Mammary epithelial cell (primary cell): ENCODE measurements at regions of chr18 and their contacts with region 1.

Region 1: GRCh38 chr18:45212181-45213039 is 402.9 kb upstream of the SLC14A2 start:
- DNase-seq: peak; percentile 63
- H3K4me3 ChIP-seq: no peak overlapping the region
- H3K27ac ChIP-seq: no peak overlapping the region
- H3K4me1 ChIP-seq: no peaks in the 10 kb centered on the region
- H3K27me3 ChIP-seq: no peaks in the 10 kb centered on the region
- CTCF ChIP-seq: peak; percentile 100

Region 2: DNA sequence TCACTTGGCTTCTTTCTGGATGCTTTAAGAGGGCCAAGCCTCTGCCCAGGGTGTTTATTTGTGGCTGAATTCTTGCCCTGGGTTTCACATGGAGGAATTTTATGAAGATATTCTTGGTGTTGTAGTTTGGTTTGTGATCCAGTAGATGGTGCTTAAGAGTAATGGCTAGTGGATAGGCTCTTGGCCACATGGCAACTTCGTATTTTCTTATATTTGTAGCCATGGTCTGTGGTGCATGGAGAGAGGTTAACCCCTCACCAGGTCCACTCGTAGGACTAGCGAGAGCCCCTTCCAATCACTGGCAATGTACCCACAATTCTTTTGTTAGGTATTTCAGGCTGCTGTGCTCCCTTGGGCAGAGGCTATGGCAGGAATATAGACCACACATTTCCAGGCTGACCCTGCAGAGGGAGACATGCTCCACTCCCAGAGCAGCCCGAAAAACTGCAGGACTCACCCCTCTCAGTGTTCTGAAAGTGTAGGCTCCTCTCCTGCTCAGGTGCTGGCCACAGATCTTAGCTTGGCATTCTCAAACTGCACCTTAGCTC is 1113.8 kb before region 1 on chr18:
- CTCF ChIA-PET with region 1: interaction called, 7 read pairs
- dilution Hi-C with region 1: no loop called
- in situ Hi-C with region 1: loop called (anchors 25 kb)
- intact Hi-C with region 1: loop called (anchors 5 kb)
- DNase-seq: peak; percentile 56
- H3K4me3 ChIP-seq: no peak overlapping the region
- H3K27ac ChIP-seq: no peak overlapping the region
- H3K4me1 ChIP-seq: no peaks in the 10 kb centered on the region
- H3K27me3 ChIP-seq: no peaks in the 10 kb centered on the region
- CTCF ChIP-seq: peak; percentile 40 to 54

Region 3: GRCh38 chr18:44458777-44459176 is 753.6 kb before region 1 on chr18:
- CTCF ChIA-PET with region 1: no interaction called
- dilution Hi-C with region 1: no loop called
- in situ Hi-C with region 1: no loop called
- intact Hi-C with region 1: loop called (anchors 10 kb)
- DNase-seq: peak; percentile 91
- H3K4me3 ChIP-seq: no peak overlapping the region
- H3K27ac ChIP-seq: peak overlapping the region; percentile 24
- H3K4me1 ChIP-seq: no peaks in the 10 kb centered on the region
- H3K27me3 ChIP-seq: no peaks in the 10 kb centered on the region
- CTCF ChIP-seq: peak in 1 of 2 donors; percentile 39

Region 4: DNA sequence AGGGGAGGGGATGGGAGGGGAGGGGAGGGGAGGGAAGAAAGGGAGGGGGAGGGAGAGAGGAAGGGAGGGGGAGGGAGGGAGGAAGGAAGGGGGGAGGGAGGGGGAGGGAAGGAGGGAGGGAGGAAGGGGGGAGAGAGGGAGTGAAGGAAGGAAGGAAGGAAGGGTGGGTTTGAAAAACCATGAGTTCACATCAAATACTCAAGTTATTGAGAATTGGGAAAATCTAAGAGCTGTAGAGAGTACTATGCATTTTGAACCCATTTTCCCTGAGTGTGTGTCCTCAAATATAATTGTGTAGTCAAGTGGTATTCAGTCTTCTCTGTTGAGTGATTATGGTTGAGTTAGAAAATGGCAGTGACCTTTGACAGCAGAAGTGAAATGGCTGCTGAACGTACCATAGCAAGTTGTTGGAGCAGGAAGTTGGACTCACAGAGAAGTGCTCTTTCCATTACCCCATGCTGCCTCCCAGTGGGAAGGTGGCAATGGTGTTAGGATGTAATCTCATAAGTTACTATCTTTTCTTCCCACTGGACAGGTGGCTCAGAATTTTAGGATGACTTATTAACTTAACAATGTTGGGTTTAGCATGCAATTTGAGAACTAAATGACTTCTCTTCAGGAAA is 317.1 kb before region 1 on chr18:
- CTCF ChIA-PET with region 1: no interaction called
- dilution Hi-C with region 1: no loop called
- in situ Hi-C with region 1: loop called (anchors 25 kb)
- intact Hi-C with region 1: no loop called
- DNase-seq: peak; percentile 54
- H3K4me3 ChIP-seq: no peak overlapping the region
- H3K27ac ChIP-seq: no peak overlapping the region
- H3K4me1 ChIP-seq: peaks cover 9% of the 10 kb centered on the region
- H3K27me3 ChIP-seq: no peaks in the 10 kb centered on the region
- CTCF ChIP-seq: peak; percentile 56 to 76

Region 5: GRCh38 chr18:44909191-44909719 is 303.2 kb before region 1 on chr18:
- CTCF ChIA-PET with region 1: interaction called, 7 read pairs
- dilution Hi-C with region 1: no loop called
- in situ Hi-C with region 1: loop called in 1 of 2 experiments (anchors 25 kb)
- intact Hi-C with region 1: no loop called
- DNase-seq: peak; percentile 65
- H3K4me3 ChIP-seq: no peak overlapping the region
- H3K27ac ChIP-seq: no peak overlapping the region
- H3K4me1 ChIP-seq: peaks cover 28% of the 10 kb centered on the region
- H3K27me3 ChIP-seq: no peaks in the 10 kb centered on the region
- CTCF ChIP-seq: no peak

Region 6: GRCh38 chr18:45059695-45060094 is 152.7 kb before region 1 on chr18:
- CTCF ChIA-PET with region 1: no interaction called
- dilution Hi-C with region 1: no loop called
- in situ Hi-C with region 1: no loop called
- intact Hi-C with region 1: no loop called
- DNase-seq: peak; percentile 83
- H3K4me3 ChIP-seq: no peak overlapping the region
- H3K27ac ChIP-seq: no peak overlapping the region
- H3K4me1 ChIP-seq: peaks cover 11% of the 10 kb centered on the region
- H3K27me3 ChIP-seq: no peaks in the 10 kb centered on the region
- CTCF ChIP-seq: no peak

Region 7: DNA sequence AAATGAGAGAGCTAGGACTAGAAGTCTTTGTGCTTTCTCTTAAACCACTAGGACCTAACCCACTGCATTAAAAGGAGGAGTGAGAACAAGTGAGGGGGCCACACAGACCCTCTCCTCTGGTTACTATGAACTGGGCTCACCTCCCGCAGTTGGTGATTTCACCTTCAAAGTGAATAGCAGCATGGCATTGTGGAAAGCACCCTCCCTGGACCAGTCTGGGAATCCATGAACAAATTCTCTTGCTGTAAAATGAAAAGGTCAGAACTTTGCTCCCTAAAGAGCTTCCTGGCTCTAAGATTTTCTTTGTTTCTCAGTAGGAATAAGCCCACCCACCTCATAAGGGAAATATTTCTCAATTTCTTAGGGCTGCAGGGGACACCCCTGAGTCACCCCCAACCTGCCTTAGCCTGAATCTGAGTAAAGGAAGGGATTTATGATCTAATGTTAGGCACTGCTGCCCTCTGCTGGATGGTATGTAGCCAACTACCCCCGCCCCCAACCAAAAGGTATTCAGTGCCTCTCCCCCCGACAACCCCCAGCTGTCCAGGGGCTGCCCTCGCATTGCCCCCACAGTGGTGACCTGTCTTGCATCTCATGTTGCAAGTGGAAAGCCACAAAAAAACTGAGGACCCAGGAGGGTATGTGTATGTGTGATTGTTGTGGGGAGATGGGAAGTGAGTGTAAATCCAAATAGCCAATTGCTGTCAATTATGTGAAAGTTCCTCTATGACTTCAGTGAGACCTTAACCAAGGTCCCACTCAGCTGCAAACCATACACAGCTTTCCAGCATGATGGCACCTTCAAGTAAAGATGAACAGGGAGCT is 171.9 kb after region 1 on chr18:
- CTCF ChIA-PET with region 1: no interaction called
- dilution Hi-C with region 1: no loop called
- in situ Hi-C with region 1: no loop called
- intact Hi-C with region 1: loop called (anchors 2 kb)
- DNase-seq: peak; percentile 48
- H3K4me3 ChIP-seq: no peak overlapping the region
- H3K27ac ChIP-seq: no peak overlapping the region
- H3K4me1 ChIP-seq: no peaks in the 10 kb centered on the region
- H3K27me3 ChIP-seq: no peaks in the 10 kb centered on the region
- CTCF ChIP-seq: peak; percentile 53 to 80